ENCODE measurements at regions of chr10 and their contacts with region 1.

Region 1: GRCh38 chr10:45091968-45092367 is 91.2 kb downstream of the ZNF22 start:
- DNase-seq: no peak
- ATAC-seq: no peak
- H3K4me3 ChIP-seq: no peak overlapping the region
- H3K27ac ChIP-seq: no peak overlapping the region
- H3K4me1 ChIP-seq: no peaks in the 10 kb centered on the region
- H3K27me3 ChIP-seq: peaks cover 6% of the 10 kb centered on the region
- CTCF ChIP-seq: no peak

Region 2: GRCh38 chr10:45106236-45106856 is 14.4 kb after region 1 on chr10:
- CTCF ChIA-PET with region 1: no interaction called
- POLR2A ChIA-PET with region 1: interaction called, 14 read pairs
- in situ Hi-C with region 1: no loop called
- intact Hi-C with region 1: no loop called
- DNase-seq: no peak
- ATAC-seq: no peak
- H3K4me3 ChIP-seq: no peak overlapping the region
- H3K27ac ChIP-seq: no peak overlapping the region
- H3K4me1 ChIP-seq: no peaks in the 10 kb centered on the region
- H3K27me3 ChIP-seq: peaks cover 10% of the 10 kb centered on the region
- CTCF ChIP-seq: no peak